Activated naive CD8-positive, alpha-beta T cell treated with anti-CD3 and anti-CD28 coated beads, Interleukin-2, amount 10 ng/mL, durations not matched to agents 7 days and 5 days (primary cell): ENCODE measurements at regions of chr16 and their contacts with region 1.

Region 1: GRCh38 chr16:57416122-57416509 is 11.5 kb downstream of the CCL17 start:
- DNase-seq: no peak
- ATAC-seq: no peak
- H3K4me3 Mint-ChIP-seq: no peak overlapping the region
- H3K27ac Mint-ChIP-seq: no peak overlapping the region
- H3K4me1 Mint-ChIP-seq: peaks cover 18% of the 10 kb centered on the region
- H3K27me3 Mint-ChIP-seq: no peaks in the 10 kb centered on the region

Region 2: DNA sequence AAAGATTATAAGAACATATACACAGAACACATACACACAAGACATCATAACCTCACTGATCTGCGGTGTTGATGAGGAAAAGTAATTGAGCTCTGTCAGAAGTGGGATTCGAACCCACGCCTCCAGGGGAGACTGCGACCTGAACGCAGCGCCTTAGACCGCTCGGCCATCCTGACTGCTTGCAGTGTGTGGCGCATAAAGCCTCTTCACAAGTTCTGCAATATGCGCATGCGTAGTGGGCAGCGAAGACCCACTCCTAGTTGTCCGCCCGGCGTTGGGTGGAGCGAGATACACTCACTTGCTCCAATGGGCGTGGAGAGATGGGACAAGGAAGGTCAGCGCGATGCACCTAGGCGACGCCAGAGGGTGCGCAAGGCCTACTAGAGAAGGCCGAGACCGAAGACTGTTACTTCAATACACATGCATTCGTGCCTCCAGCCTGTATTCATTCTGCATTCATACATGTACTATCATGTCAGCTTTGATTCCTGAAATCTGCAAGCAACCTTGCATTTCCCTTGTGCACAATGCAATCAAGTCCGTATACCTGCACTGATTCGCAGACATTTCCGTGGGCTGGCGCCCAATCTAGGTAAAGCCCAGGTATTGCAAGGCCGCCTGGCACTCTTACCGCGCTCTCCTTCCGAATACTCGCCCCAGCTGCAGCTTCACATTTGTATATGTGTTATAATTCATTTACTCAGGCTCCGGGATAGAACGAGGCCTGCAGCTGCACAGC is 115.6 kb before region 1 on chr16:
- POLR2A ChIA-PET with region 1: interaction called, 25 read pairs
- DNase-seq: peak; percentile 100
- ATAC-seq: peak; percentile 88
- H3K4me3 Mint-ChIP-seq: no peak overlapping the region
- H3K27ac Mint-ChIP-seq: no peak overlapping the region
- H3K4me1 Mint-ChIP-seq: peaks cover 19% of the 10 kb centered on the region
- H3K27me3 Mint-ChIP-seq: no peaks in the 10 kb centered on the region